GM12878 (cell line): ENCODE measurements at regions of chr10 and their contacts with region 1.

Region 1: GRCh38 chr10:82811621-82812020 is 936.6 kb downstream of the NRG3 start:
- DNase-seq: no peak
- ATAC-seq: peak; percentile 71
- H3K4me3 ChIP-seq: no peak overlapping the region
- H3K27ac ChIP-seq: no peak overlapping the region
- H3K4me1 ChIP-seq: no peaks in the 10 kb centered on the region
- H3K27me3 ChIP-seq: no peaks in the 10 kb centered on the region
- CTCF ChIP-seq: peak; percentile 27 to 63 (median 53); a peak in 5 of 6 replicates
- EP300 ChIP-seq: no peak
- POLR2A ChIP-seq: no peak
- RAD21 ChIP-seq: peak; percentile 55; the same call in 1 of the 2 replicates

Region 2: GRCh38 chr10:82826132-82826531 is 14.5 kb after region 1 on chr10:
- CTCF ChIA-PET with region 1: interaction called, 15 read pairs
- POLR2A ChIA-PET with region 1: no interaction called
- RAD21 ChIA-PET with region 1: interaction called, 3 read pairs
- SMC1A ChIA-PET with region 1: interaction called, 5 read pairs
- in situ Hi-C with region 1: no loop called
- intact Hi-C with region 1: no loop called
- DNase-seq: no peak
- ATAC-seq: no peak
- H3K4me3 ChIP-seq: no peak overlapping the region
- H3K27ac ChIP-seq: no peak overlapping the region
- H3K4me1 ChIP-seq: no peaks in the 10 kb centered on the region
- H3K27me3 ChIP-seq: no peaks in the 10 kb centered on the region
- CTCF ChIP-seq: no peak
- EP300 ChIP-seq: no peak
- POLR2A ChIP-seq: no peak
- RAD21 ChIP-seq: no peak

Region 3: DNA sequence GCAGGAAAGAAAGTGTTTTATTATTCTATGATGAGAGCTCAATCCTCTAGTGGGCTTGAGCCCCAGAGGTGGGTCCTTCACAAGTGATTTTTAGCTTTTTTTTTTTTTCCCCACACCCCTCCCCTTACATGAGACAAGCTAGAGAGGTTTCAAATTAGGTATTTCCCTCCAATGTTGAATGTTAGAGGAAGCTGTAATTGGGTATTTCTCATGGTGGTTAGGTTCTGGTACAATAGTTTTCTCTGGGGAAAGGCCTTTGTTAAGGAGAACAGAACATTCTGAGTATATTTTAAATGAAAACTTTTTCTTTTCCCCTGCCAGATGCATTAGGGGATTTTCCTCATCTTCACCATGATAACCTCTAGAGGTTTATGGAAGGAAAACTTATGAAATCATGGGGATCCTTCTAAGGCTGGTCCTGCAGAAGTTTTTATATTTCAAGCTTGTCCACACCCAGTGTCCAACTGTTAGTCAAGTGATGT is 103.1 kb after region 1 on chr10:
- CTCF ChIA-PET with region 1: interaction called, 4 read pairs
- POLR2A ChIA-PET with region 1: no interaction called
- RAD21 ChIA-PET with region 1: interaction called, 4 read pairs
- SMC1A ChIA-PET with region 1: interaction called, 6 read pairs
- in situ Hi-C with region 1: no loop called
- intact Hi-C with region 1: loop called (anchors 5 kb)
- DNase-seq: peak; percentile 55
- ATAC-seq: peak; percentile 94
- H3K4me3 ChIP-seq: no peak overlapping the region
- H3K27ac ChIP-seq: no peak overlapping the region
- H3K4me1 ChIP-seq: no peaks in the 10 kb centered on the region
- H3K27me3 ChIP-seq: no peaks in the 10 kb centered on the region
- CTCF ChIP-seq: no peak
- EP300 ChIP-seq: no peak
- POLR2A ChIP-seq: no peak
- RAD21 ChIP-seq: peak; percentile 10; the same call in 1 of the 2 replicates

Region 4: GRCh38 chr10:82969405-82969804 is 157.8 kb after region 1 on chr10:
- CTCF ChIA-PET with region 1: interaction called, 36 read pairs
- POLR2A ChIA-PET with region 1: no interaction called
- RAD21 ChIA-PET with region 1: interaction called, 22 read pairs
- SMC1A ChIA-PET with region 1: interaction called, 26 read pairs
- in situ Hi-C with region 1: no loop called
- intact Hi-C with region 1: loop called (anchors 1 kb)
- DNase-seq: no peak
- ATAC-seq: peak; percentile 66
- H3K4me3 ChIP-seq: no peak overlapping the region
- H3K27ac ChIP-seq: no peak overlapping the region
- H3K4me1 ChIP-seq: no peaks in the 10 kb centered on the region
- H3K27me3 ChIP-seq: no peaks in the 10 kb centered on the region
- CTCF ChIP-seq: peak in 2 of 3 experiments; percentile 18 to 55; a peak in 3 of 6 replicates
- EP300 ChIP-seq: no peak
- POLR2A ChIP-seq: no peak
- RAD21 ChIP-seq: peak; percentile 90